ENCODE measurements at regions of chr3 and their contacts with region 1.

Region 1: GRCh38 chr3:108662130-108662738 is 72.7 kb downstream of the DZIP3 start:
- DNase-seq: peak; percentile 33 to 53
- H3K4me3 ChIP-seq: no peak overlapping the region
- H3K4me3 Mint-ChIP-seq: no peak overlapping the region
- H3K27ac Mint-ChIP-seq: no peak overlapping the region
- H3K4me1 ChIP-seq: no peaks in the 10 kb centered on the region
- H3K4me1 Mint-ChIP-seq: no peaks in the 10 kb centered on the region
- H3K27me3 ChIP-seq: no peaks in the 10 kb centered on the region
- H3K27me3 Mint-ChIP-seq: no peaks in the 10 kb centered on the region
- CTCF ChIP-seq: peak; percentile 51 to 62

Region 2: DNA sequence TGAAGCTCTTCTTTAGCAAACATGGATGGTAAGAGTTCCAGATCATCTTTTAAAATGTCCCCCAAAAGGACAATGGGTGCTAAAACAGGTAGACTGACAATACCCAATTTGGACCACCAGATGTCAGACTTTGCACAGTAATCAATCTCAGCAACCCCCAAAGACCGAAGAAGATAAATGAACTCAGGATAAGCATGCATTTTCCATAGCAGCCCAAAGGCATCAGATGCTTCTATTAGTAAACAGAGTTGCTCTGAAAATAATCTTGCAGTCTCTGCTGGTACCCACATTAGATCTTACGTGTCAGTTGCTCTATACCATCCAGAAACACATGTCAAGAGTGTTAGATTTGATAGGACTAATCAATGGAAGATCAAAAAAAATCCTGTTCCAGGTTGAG is 172.5 kb before region 1 on chr3:
- CTCF ChIA-PET with region 1: no interaction called
- POLR2A ChIA-PET with region 1: no interaction called
- intact Hi-C with region 1: loop called (anchors 10 kb)
- DNase-seq: peak in 1 of 2 experiments; percentile 51
- H3K4me3 ChIP-seq: no peak overlapping the region
- H3K4me3 Mint-ChIP-seq: no peak overlapping the region
- H3K27ac Mint-ChIP-seq: no peak overlapping the region
- H3K4me1 ChIP-seq: no peaks in the 10 kb centered on the region
- H3K4me1 Mint-ChIP-seq: no peaks in the 10 kb centered on the region
- H3K27me3 ChIP-seq: no peaks in the 10 kb centered on the region; the same call in 1 of the 2 replicates
- H3K27me3 Mint-ChIP-seq: peaks cover 12% of the 10 kb centered on the region
- CTCF ChIP-seq: peak; percentile 53 to 74

Region 3: GRCh38 chr3:108719178-108719806 is 57.1 kb after region 1 on chr3:
- CTCF ChIA-PET with region 1: no interaction called
- POLR2A ChIA-PET with region 1: no interaction called
- intact Hi-C with region 1: no loop called
- DNase-seq: no peak
- H3K4me3 ChIP-seq: no peak overlapping the region
- H3K4me3 Mint-ChIP-seq: no peak overlapping the region
- H3K27ac Mint-ChIP-seq: no peak overlapping the region
- H3K4me1 ChIP-seq: no peaks in the 10 kb centered on the region
- H3K4me1 Mint-ChIP-seq: no peaks in the 10 kb centered on the region
- H3K27me3 ChIP-seq: no peaks in the 10 kb centered on the region; the same call in 1 of the 2 replicates
- H3K27me3 Mint-ChIP-seq: no peaks in the 10 kb centered on the region
- CTCF ChIP-seq: no peak

Region 4: GRCh38 chr3:108818404-108818803 is 156.2 kb after region 1 on chr3:
- CTCF ChIA-PET with region 1: interaction called, 5 read pairs
- POLR2A ChIA-PET with region 1: no interaction called
- intact Hi-C with region 1: loop called (anchors 1 kb)
- DNase-seq: peak; percentile 56 to 61
- H3K4me3 ChIP-seq: no peak overlapping the region
- H3K4me3 Mint-ChIP-seq: no peak overlapping the region
- H3K27ac Mint-ChIP-seq: no peak overlapping the region
- H3K4me1 ChIP-seq: no peaks in the 10 kb centered on the region
- H3K4me1 Mint-ChIP-seq: no peaks in the 10 kb centered on the region
- H3K27me3 ChIP-seq: no peaks in the 10 kb centered on the region
- H3K27me3 Mint-ChIP-seq: no peaks in the 10 kb centered on the region
- CTCF ChIP-seq: peak; percentile 17 to 68

Region 5: DNA sequence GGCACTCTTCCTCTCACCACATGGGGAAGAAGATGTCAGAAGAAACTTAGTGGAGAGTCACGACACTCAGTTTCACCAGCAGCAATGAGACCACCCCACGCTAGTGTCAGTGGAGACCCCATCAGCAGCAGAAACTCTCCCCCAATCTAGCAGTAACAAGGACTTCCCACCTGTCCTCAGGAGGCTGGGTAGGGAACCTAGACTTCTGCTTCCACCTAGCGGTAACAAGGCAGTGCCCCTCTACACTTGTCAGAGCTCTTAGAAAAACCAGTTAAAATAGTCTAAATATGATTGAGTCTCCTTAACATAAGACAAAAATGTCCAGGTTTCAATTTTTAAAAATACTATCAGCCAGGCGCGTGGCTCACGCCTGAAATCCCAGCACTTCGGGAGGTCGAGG is 217.7 kb after region 1 on chr3:
- CTCF ChIA-PET with region 1: no interaction called
- POLR2A ChIA-PET with region 1: no interaction called
- intact Hi-C with region 1: loop called (anchors 1 kb)
- DNase-seq: peak in 1 of 2 experiments; percentile 6
- H3K4me3 ChIP-seq: no peak overlapping the region
- H3K4me3 Mint-ChIP-seq: no peak overlapping the region
- H3K27ac Mint-ChIP-seq: no peak overlapping the region
- H3K4me1 ChIP-seq: no peaks in the 10 kb centered on the region
- H3K4me1 Mint-ChIP-seq: no peaks in the 10 kb centered on the region
- H3K27me3 ChIP-seq: no peaks in the 10 kb centered on the region
- H3K27me3 Mint-ChIP-seq: peaks cover 4% of the 10 kb centered on the region
- CTCF ChIP-seq: peak in 1 of 2 experiments; percentile 23

Region 6: DNA sequence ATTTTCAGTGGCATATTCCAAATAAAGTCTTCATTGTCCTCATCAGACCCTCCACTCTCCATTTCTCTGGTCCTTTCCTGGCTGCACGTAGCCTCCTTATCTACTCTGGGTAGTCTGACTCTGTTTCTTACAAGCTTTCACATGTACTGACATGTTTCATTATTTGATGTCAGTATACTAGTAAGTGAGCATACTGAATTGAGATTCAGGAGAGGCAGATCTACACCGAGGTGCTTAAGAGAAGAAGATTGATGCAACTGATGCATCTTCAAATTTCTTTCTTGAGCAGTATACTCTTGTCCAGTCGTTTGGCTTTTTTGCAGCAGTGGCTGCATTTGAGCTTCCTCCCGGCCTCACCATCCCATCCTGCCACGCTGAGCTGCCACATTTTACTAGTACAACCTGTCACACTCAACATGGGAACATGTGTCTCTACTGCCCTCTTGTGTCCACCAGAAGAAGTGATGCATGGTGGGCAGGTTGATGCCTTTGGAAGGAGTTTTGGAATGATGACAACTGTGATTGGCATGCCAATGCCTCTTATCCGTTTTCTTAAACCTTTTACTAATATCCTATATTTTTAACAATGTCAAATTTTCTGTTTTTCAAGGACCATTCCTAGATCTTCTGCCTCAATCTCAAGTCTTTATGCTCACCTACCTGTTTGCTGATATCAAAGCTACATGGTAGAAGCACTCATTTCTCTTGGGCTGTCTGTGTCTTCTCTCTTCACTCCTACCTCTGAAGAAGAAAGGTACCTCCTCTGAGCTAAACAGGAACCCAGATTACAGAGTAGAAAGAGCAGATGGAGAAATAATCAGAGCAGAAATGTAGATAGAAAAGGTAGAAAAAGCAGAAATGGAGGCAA is 252.8 kb after region 1 on chr3:
- CTCF ChIA-PET with region 1: interaction called, 6 read pairs
- POLR2A ChIA-PET with region 1: no interaction called
- intact Hi-C with region 1: loop called (anchors 1 kb)
- DNase-seq: peak; percentile 59 to 67
- H3K4me3 ChIP-seq: no peak overlapping the region
- H3K4me3 Mint-ChIP-seq: no peak overlapping the region
- H3K27ac Mint-ChIP-seq: no peak overlapping the region
- H3K4me1 ChIP-seq: no peaks in the 10 kb centered on the region
- H3K4me1 Mint-ChIP-seq: peaks cover 6% of the 10 kb centered on the region
- H3K27me3 ChIP-seq: no peaks in the 10 kb centered on the region
- H3K27me3 Mint-ChIP-seq: no peaks in the 10 kb centered on the region
- CTCF ChIP-seq: peak; percentile 84 to 85

Region 7: GRCh38 chr3:109023656-109024254 is 361.5 kb after region 1 on chr3:
- CTCF ChIA-PET with region 1: no interaction called
- POLR2A ChIA-PET with region 1: no interaction called
- intact Hi-C with region 1: loop called (anchors 2 kb)
- DNase-seq: peak; percentile 36 to 47
- H3K4me3 ChIP-seq: no peak overlapping the region
- H3K4me3 Mint-ChIP-seq: no peak overlapping the region
- H3K27ac Mint-ChIP-seq: no peak overlapping the region
- H3K4me1 ChIP-seq: no peaks in the 10 kb centered on the region
- H3K4me1 Mint-ChIP-seq: no peaks in the 10 kb centered on the region
- H3K27me3 ChIP-seq: no peaks in the 10 kb centered on the region
- H3K27me3 Mint-ChIP-seq: no peaks in the 10 kb centered on the region
- CTCF ChIP-seq: peak; percentile 70 to 73

Region 8: GRCh38 chr3:109081746-109082510 is 419.7 kb after region 1 on chr3:
- CTCF ChIA-PET with region 1: no interaction called
- POLR2A ChIA-PET with region 1: no interaction called
- intact Hi-C with region 1: loop called (anchors 1 kb)
- DNase-seq: peak; percentile 36 to 47
- H3K4me3 ChIP-seq: no peak overlapping the region
- H3K4me3 Mint-ChIP-seq: no peak overlapping the region
- H3K27ac Mint-ChIP-seq: no peak overlapping the region
- H3K4me1 ChIP-seq: no peaks in the 10 kb centered on the region
- H3K4me1 Mint-ChIP-seq: no peaks in the 10 kb centered on the region
- H3K27me3 ChIP-seq: no peaks in the 10 kb centered on the region
- H3K27me3 Mint-ChIP-seq: peaks cover 19% of the 10 kb centered on the region
- CTCF ChIP-seq: peak; percentile 67 to 69

Measured in Caco-2 (cell line).